ENCODE measurements at regions of chr7 and their contacts with region 1.

Region 1: DNA sequence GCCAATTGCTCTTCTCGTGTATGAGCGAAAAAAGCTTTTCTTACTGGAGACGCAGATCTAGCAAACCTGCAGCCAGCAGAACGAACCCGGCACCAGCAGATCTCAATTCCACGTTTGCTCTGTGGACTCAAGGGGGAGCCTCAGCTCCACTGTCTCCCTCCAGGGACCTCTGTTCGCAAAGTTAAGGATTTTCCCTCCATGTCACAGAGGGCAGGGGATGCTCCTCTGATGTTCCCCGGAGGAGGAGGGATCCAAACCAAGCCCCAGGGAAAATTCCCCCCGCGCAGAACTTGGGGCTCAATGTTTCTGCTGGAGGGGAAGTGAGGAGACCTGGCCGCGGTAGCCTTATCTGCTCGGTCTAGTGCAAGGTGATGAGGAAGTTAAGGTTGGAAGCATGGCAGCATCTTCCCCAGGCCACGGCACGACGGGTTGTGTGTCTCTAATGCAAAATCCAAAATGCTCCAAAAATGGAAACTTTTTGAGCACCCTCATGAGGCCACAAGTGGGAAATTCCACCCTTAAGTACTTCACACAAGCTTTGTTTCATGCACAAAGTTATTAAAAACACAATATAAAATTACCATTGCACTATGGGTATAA is 9.0 kb downstream of the IQCE start:
- DNase-seq: peak in 2 of 4 experiments; percentile 26 to 31
- ATAC-seq: peak; percentile 78
- H3K4me3 ChIP-seq: no peak overlapping the region
- H3K27ac ChIP-seq: no peak overlapping the region
- H3K4me1 ChIP-seq: peaks cover 12 to 14% of the 10 kb centered on the region in 2 experiments; a peak in 4 of 5 replicates
- H3K27me3 ChIP-seq: no peaks in the 10 kb centered on the region
- CTCF ChIP-seq: peak; percentile 61 to 68 (median 66)
- EP300 ChIP-seq: no peak
- POLR2A ChIP-seq: no peak
- RAD21 ChIP-seq: peak; percentile 17 to 55; a peak in 3 of 4 replicates

Region 2: GRCh38 chr7:2477447-2478398 is 90.1 kb before region 1 on chr7:
- CTCF ChIA-PET with region 1: no interaction called
- POLR2A ChIA-PET with region 1: no interaction called
- in situ Hi-C with region 1: no loop called
- intact Hi-C with region 1: loop called (anchors 5 kb)
- DNase-seq: peak; percentile 64 to 81 (median 80)
- ATAC-seq: peak; percentile 94
- H3K4me3 ChIP-seq: no peak overlapping the region
- H3K27ac ChIP-seq: no peak overlapping the region
- H3K4me1 ChIP-seq: peaks cover 0 to 53% of the 10 kb centered on the region in 2 experiments; a peak in 3 of 5 replicates
- H3K27me3 ChIP-seq: peaks cover 15 to 36% of the 10 kb centered on the region in 2 experiments; a peak in 4 of 5 replicates
- CTCF ChIP-seq: peak; percentile 70 to 86 (median 79)
- EP300 ChIP-seq: no peak
- POLR2A ChIP-seq: no peak
- RAD21 ChIP-seq: peak; percentile 61 to 82

Region 3: GRCh38 chr7:2651336-2651735 is 83.6 kb after region 1 on chr7:
- CTCF ChIA-PET with region 1: no interaction called
- POLR2A ChIA-PET with region 1: no interaction called
- in situ Hi-C with region 1: no loop called
- intact Hi-C with region 1: loop called (anchors 10 kb)
- DNase-seq: peak; percentile 58 to 64 (median 60)
- ATAC-seq: peak; percentile 65
- H3K4me3 ChIP-seq: no peak overlapping the region
- H3K27ac ChIP-seq: no peak overlapping the region
- H3K4me1 ChIP-seq: peaks cover 6 to 58% of the 10 kb centered on the region in 2 experiments; a peak in 3 of 5 replicates
- H3K27me3 ChIP-seq: peaks cover 2 to 17% of the 10 kb centered on the region in 2 experiments; a peak in 2 of 5 replicates
- CTCF ChIP-seq: peak; percentile 48 to 55 (median 53); a peak in 5 of 6 replicates
- EP300 ChIP-seq: no peak
- POLR2A ChIP-seq: no peak
- RAD21 ChIP-seq: peak in 1 of 2 experiments; percentile 26; a peak in 1 of 4 replicates

Region 4: DNA sequence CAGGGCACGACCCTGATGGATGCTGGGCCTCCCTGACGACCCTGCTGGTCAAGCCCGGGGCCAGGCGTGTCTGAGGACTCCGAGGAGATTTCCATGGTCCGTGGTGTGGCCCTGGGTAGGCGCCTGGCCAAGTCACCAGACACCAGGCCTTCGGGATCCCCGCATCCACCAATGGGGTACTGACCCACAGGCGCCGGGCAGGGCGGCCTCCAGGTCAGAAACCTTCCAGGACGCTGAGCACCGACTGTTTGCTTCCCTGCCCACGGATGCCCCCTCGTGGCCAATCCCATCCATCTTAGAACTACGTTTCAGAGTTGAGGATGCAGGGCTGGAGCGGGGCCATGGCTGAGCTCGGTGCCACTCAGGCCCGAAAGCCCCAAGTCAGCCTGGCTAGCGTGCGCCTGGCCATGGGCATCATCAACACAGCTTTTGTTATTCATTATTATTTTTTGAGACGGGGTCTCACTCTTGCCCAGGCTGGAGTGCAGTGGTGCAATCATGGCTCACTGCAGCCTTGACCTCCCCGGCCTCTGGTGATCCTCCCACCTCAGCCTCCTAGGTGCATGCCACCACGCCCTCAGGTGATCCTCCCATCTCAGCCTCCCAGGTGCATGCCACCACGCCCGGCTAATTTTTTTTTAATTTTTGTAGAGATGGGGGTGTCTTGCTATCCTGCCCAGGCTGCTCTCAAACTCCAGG is 113.2 kb after region 1 on chr7:
- CTCF ChIA-PET with region 1: no interaction called
- POLR2A ChIA-PET with region 1: no interaction called
- in situ Hi-C with region 1: no loop called
- intact Hi-C with region 1: loop called (anchors 10 kb)
- DNase-seq: peak; percentile 82 to 85 (median 84)
- ATAC-seq: peak; percentile 94
- H3K4me3 ChIP-seq: no peak overlapping the region
- H3K27ac ChIP-seq: no peak overlapping the region
- H3K4me1 ChIP-seq: peaks cover 0 to 27% of the 10 kb centered on the region in 2 experiments; a peak in 2 of 5 replicates
- H3K27me3 ChIP-seq: peaks cover 14 to 45% of the 10 kb centered on the region in 2 experiments; a peak in 3 of 5 replicates
- CTCF ChIP-seq: peak; percentile 78 to 85 (median 85)
- EP300 ChIP-seq: no peak
- POLR2A ChIP-seq: no peak
- RAD21 ChIP-seq: peak; percentile 65 to 84